Tibial artery (tissue), 4 donors: ENCODE measurements at regions of chr13 and their contacts with region 1.

Region 1: DNA sequence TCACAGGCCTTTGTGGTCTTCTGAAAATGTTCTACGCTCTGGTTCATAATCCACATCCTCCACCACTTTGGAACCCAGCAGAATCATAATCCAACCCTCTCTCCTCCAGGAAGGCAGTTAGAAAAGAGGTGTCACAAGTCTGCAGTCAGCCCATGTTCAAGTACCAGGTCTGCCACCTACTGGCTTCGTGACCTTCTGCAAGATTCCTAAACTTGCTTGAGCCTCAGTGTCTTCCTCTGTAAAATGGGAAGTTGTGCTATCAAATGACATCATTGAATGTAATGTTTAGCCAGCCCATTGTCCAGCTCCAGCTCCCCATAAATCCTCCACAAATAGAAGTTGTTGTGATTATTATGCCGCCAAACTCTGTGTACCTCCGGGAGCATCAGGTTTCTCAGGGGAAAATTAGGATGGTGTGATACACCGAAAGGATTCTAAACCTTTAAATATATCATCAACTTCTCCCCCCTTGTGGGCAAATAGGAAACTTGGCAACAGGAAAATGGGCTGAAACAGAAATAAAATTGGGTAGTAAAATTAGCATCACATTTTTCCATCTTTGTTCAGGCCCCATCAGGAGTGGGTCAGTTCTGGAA is 109.7 kb downstream of the NUFIP1 start:
- DNase-seq: no peak
- H3K4me3 ChIP-seq: no peak overlapping the region
- H3K27ac ChIP-seq: no peak overlapping the region
- H3K4me1 ChIP-seq: peaks cover 0 to 4% (median 0%) of the 10 kb centered on the region in 4 donors
- H3K27me3 ChIP-seq: no peaks in the 10 kb centered on the region
- CTCF ChIP-seq: peak; percentile 38 to 46

Region 2: DNA sequence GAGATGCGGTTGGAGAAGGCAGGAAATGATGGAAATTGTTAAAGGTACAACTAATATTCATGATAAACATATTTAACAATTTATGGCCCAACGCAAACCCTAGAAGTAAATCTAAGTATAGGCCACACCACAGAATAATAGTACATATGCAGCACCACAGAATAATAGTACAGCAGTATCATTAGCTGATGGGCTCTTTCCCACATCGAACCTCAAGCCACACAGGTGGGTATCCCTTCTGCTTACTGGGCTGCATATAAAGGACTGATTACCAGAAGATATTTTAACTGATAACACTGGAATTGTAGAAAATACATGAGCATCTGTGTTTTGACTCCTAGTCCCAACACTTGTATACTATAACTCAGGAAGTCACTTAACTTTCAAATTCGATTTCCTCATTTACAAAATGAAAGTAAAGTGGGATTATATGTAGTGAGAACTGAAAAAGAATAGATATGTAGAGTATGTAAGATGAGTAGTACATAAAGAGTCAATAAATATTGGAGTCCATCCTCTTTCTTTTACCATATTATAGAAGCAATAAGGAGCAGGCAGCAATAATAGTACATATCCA is 394.9 kb before region 1 on chr13:
- intact Hi-C with region 1: loop called (anchors 10 kb)
- DNase-seq: no peak
- H3K4me3 ChIP-seq: no peak overlapping the region
- H3K27ac ChIP-seq: peak overlapping the region in 1 of 2 donors; percentile 15
- H3K4me1 ChIP-seq: peaks cover 0 to 41% (median 4%) of the 10 kb centered on the region in 4 donors
- H3K27me3 ChIP-seq: no peaks in the 10 kb centered on the region
- CTCF ChIP-seq: no peak